Ovary (tissue), 10 donors: ENCODE measurements at regions of chr11 and their contacts with region 1.

Region 1: GRCh38 chr11:108664730-108665525 is at the start of gene DDX10:
- DNase-seq: peak; percentile 98 to 99 (median 99)
- H3K4me3 ChIP-seq: peak within 1 kb of the TSS; percentile 54
- H3K27ac ChIP-seq: no peak within 1 kb of the TSS
- H3K4me1 ChIP-seq: peaks cover 16% of the 10 kb centered on the region
- H3K27me3 ChIP-seq: no peaks in the 10 kb centered on the region
- CTCF ChIP-seq: peak in 1 of 3 donors; percentile 40
- EP300 ChIP-seq: no peak
- POLR2A ChIP-seq: no peak
- total RNA-seq, gene DDX10: 13.1 to 34.3 (median 26.4) TPM

Region 2: GRCh38 chr11:108199446-108200321 is 465.2 kb before region 1 on chr11:
- intact Hi-C with region 1: no loop called
- DNase-seq: no peak
- H3K4me3 ChIP-seq: no peak overlapping the region
- H3K27ac ChIP-seq: no peak overlapping the region
- H3K4me1 ChIP-seq: peaks cover 2% of the 10 kb centered on the region
- H3K27me3 ChIP-seq: no peaks in the 10 kb centered on the region
- CTCF ChIP-seq: no peak
- EP300 ChIP-seq: no peak
- POLR2A ChIP-seq: no peak

Region 3: DNA sequence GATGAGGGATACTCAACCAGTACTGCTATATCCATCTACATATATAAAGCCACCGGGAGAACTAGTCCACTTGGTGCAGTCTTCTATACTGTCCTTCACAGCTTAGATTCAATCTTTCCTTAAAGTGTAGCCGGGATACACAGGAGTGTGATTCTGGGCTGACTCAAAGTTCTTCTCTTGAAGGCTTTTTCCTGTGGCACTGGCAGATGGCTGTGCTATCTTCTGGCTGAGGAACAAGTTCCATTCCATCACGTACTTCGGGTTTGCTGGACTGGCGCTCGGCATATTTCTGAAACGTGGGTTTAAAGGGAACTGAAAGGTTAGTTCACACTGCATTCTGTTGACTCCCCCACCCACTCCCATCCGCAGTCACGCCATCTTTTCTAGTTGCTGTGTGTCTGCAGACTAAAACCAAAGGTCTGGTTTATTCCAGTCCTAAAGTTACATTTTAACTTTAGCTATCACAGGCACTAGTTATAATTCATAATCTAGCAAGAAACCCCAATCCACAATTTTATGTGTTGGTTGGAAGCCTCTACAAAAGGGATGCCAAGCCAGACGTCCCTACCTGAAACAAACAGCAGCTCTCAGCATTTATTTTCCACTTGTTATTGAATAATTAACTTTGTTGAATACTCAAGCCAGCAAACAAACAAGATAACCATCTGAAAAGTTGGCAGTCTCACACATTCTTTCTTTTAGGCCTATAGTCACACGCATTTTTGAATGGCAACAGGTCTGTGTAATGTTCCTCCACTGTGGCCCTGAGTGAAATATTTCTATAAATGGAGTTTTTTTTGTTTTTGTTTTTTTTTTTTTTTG is 190.1 kb before region 1 on chr11:
- intact Hi-C with region 1: loop called in 1 of 4 experiments (anchors 10 kb)
- DNase-seq: no peak
- H3K4me3 ChIP-seq: no peak overlapping the region
- H3K27ac ChIP-seq: no peak overlapping the region
- H3K4me1 ChIP-seq: no peaks in the 10 kb centered on the region
- H3K27me3 ChIP-seq: no peaks in the 10 kb centered on the region
- CTCF ChIP-seq: no peak
- EP300 ChIP-seq: no peak
- POLR2A ChIP-seq: no peak

Region 4: DNA sequence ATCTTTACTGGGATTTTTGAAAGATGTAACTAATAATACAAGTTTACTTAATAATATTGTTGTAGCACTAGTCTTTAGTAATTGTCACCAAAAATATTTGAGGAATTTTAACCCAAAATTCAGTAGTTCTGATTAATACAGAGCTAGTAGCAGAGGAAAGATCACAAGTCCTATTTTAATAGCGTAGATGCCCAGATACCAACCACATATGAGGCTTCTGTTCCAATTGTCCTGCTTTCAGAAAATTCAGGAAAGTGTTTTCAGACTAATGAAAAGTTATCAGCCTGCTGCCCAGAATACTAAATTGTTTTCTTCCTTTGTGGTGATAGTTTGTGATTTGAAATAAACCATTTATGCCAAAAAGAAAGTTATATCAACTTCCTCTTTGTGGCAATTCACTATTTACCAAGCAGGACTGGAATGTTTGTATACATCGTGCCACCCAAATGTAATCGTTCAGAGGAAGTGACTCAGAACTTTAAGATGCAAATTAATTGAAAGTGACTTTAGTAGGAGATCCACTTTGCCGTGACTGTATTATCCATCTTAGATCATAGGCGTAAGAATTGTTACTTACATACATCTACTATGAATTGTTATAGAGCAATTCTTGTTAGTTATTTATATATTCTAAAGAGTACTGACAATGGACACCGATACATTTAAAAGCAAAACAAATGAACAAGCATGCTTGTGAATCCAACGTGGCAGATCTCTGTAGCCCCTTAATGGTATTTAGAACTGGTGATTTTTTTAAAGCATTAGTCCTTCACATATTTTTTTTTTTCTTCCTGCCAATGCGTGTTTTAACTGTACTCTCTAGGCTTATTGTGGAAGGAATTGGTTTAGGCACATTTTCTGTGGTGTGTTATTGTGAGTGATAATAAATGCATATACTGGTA is 230.9 kb after region 1 on chr11:
- intact Hi-C with region 1: no loop called
- DNase-seq: no peak
- H3K4me3 ChIP-seq: no peak overlapping the region
- H3K27ac ChIP-seq: no peak overlapping the region
- H3K4me1 ChIP-seq: no peaks in the 10 kb centered on the region
- H3K27me3 ChIP-seq: no peaks in the 10 kb centered on the region
- CTCF ChIP-seq: no peak
- EP300 ChIP-seq: no peak
- POLR2A ChIP-seq: no peak

Region 5: GRCh38 chr11:109000531-109000930 is 335.6 kb after region 1 on chr11:
- intact Hi-C with region 1: no loop called
- DNase-seq: no peak
- H3K4me3 ChIP-seq: no peak overlapping the region
- H3K27ac ChIP-seq: no peak overlapping the region
- H3K4me1 ChIP-seq: no peaks in the 10 kb centered on the region
- H3K27me3 ChIP-seq: no peaks in the 10 kb centered on the region
- CTCF ChIP-seq: no peak
- EP300 ChIP-seq: no peak
- POLR2A ChIP-seq: no peak